Natural killer cell (primary cell): ENCODE measurements at regions of chr9 and their contacts with region 1.

Region 1: GRCh38 chr9:96232539-96233241 is 69.3 kb downstream of the HSD17B3 start:
- DNase-seq: peak in 1 of 2 donors; percentile 62
- ATAC-seq: peak; percentile 66 to 85 (median 73)
- H3K4me3 ChIP-seq: no peak overlapping the region
- H3K4me3 Mint-ChIP-seq: no peak overlapping the region
- H3K27ac ChIP-seq: no peak overlapping the region
- H3K27ac Mint-ChIP-seq: no peak overlapping the region
- H3K4me1 ChIP-seq: no peaks in the 10 kb centered on the region
- H3K4me1 Mint-ChIP-seq: peaks cover 0 to 6% of the 10 kb centered on the region in 2 donors
- H3K27me3 ChIP-seq: peaks cover 25% of the 10 kb centered on the region
- H3K27me3 Mint-ChIP-seq: peaks cover 41 to 59% of the 10 kb centered on the region in 2 donors
- CTCF ChIP-seq: peak; percentile 80

Region 2: DNA sequence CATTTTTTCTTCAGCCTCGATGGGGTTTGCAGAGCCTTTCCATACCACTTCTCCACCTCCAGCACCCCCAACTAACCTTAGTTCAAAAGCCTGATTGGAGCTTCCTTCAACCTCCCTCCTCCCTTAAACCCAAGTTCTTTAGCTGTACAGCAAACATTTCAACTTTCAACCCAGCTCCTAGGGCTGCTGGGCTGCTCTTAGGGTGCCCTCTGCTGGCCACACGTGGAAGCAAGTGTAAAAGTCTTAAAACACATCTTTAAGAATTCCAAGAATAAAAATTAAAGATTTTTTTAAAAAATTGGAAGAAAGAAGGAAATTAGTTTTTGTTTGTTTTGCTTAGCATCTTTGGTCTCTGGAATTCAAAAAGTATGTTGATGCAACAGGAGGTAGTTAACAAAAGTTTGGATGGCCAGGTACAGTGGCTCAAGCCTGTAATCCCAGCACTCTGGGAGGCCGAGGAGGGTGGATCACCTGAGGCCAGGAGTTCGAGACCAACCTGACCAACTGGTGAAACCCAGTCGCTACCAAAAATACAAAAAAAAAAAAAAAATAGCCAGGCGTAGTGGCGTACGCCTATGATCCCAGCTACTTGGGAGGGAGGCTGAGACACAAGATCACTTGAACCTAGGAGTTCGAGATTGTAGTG is 84.8 kb after region 1 on chr9:
- intact Hi-C with region 1: loop called (anchors 1 kb)
- DNase-seq: peak; percentile 28 to 75
- ATAC-seq: peak; percentile 53 to 72 (median 71)
- H3K4me3 ChIP-seq: no peak overlapping the region
- H3K4me3 Mint-ChIP-seq: no peak overlapping the region
- H3K27ac ChIP-seq: no peak overlapping the region
- H3K27ac Mint-ChIP-seq: no peak overlapping the region
- H3K4me1 ChIP-seq: no peaks in the 10 kb centered on the region
- H3K4me1 Mint-ChIP-seq: peaks cover 0 to 5% of the 10 kb centered on the region in 2 donors
- H3K27me3 ChIP-seq: no peaks in the 10 kb centered on the region
- H3K27me3 Mint-ChIP-seq: peaks cover 0 to 7% of the 10 kb centered on the region in 2 donors
- CTCF ChIP-seq: peak; percentile 76